CD8-positive, alpha-beta T cell (primary cell): ENCODE measurements at regions of chr3 and their contacts with region 1.

Region 1: DNA sequence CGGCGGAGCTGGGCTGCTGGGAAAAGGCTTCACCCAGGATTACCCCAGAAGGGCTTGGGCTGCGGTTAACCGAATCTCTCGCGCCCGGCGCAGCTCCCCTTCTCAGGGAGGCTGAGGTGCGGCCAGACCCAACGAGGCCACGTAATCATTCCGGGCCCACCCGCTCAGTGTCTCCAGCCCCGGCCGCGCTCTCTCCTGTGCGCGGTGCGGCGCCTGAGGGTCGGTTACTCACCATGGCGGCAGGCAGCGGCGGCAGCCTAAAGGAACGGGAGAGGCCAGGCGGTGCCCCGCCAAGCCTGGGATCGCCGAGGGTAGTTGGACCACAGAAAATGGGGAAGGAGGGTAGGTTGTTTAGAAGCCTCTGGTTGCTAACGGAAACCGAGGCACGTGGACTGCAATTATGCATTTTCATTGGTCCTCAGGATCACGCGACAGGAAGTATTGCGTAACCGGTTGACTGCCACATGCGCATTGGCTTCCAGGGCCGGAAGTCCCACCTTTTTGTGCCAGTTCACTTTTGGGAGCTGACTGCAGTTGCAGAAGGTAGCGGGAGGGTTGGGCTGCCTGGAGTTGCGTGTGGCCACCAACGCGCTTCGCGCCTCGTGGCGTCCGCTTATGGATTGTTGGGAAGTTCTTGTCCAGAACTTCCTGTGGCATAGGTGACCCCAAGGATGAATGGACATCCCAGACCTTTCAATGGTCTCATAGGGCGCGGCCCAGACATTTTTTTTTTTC is at the start of gene LZTFL1:
- DNase-seq: peak; percentile 74 to 97 (median 91)
- ATAC-seq: peak; percentile 83
- H3K4me3 ChIP-seq: peak within 1 kb of the TSS; percentile 88 to 89
- H3K4me3 Mint-ChIP-seq: peak within 1 kb of the TSS; percentile 96
- H3K27ac ChIP-seq: peak within 1 kb of the TSS; percentile 89 to 93
- H3K27ac Mint-ChIP-seq: peak within 1 kb of the TSS; percentile 96
- H3K4me1 ChIP-seq: peaks cover 11% of the 10 kb centered on the region
- H3K4me1 Mint-ChIP-seq: peaks cover 16% of the 10 kb centered on the region
- H3K27me3 ChIP-seq: no peaks in the 10 kb centered on the region
- H3K27me3 Mint-ChIP-seq: no peaks in the 10 kb centered on the region
- CTCF ChIP-seq: no peak
- total RNA-seq, gene LZTFL1: 10.0 TPM

Region 2: GRCh38 chr3:45852828-45853227 is 10.9 kb after region 1 on chr3:
- CTCF ChIA-PET with region 1: interaction called, 8 read pairs
- POLR2A ChIA-PET with region 1: interaction called, 10 read pairs
- intact Hi-C with region 1: no loop called
- DNase-seq: no peak
- ATAC-seq: no peak
- H3K4me3 ChIP-seq: no peak overlapping the region
- H3K4me3 Mint-ChIP-seq: no peak overlapping the region
- H3K27ac ChIP-seq: no peak overlapping the region
- H3K27ac Mint-ChIP-seq: peak overlapping the region; percentile 20
- H3K4me1 ChIP-seq: no peaks in the 10 kb centered on the region
- H3K4me1 Mint-ChIP-seq: peaks cover 29% of the 10 kb centered on the region
- H3K27me3 ChIP-seq: peaks cover 0 to 4% of the 10 kb centered on the region in 2 experiments
- H3K27me3 Mint-ChIP-seq: peaks cover 24% of the 10 kb centered on the region
- CTCF ChIP-seq: no peak

Region 3: GRCh38 chr3:45890405-45890804 is 48.5 kb after region 1 on chr3:
- CTCF ChIA-PET with region 1: interaction called, 3 read pairs
- POLR2A ChIA-PET with region 1: no interaction called
- intact Hi-C with region 1: loop called in 1 of 2 experiments (anchors 2 kb)
- DNase-seq: peak in 5 of 9 experiments; percentile 23 to 66 (median 46)
- ATAC-seq: no peak
- H3K4me3 ChIP-seq: no peak overlapping the region
- H3K4me3 Mint-ChIP-seq: peak overlapping the region; percentile 45
- H3K27ac ChIP-seq: no peak overlapping the region
- H3K27ac Mint-ChIP-seq: no peak overlapping the region
- H3K4me1 ChIP-seq: peaks cover 22% of the 10 kb centered on the region
- H3K4me1 Mint-ChIP-seq: peaks cover 57% of the 10 kb centered on the region
- H3K27me3 ChIP-seq: no peaks in the 10 kb centered on the region
- H3K27me3 Mint-ChIP-seq: peaks cover 16% of the 10 kb centered on the region
- CTCF ChIP-seq: no peak

Region 4: DNA sequence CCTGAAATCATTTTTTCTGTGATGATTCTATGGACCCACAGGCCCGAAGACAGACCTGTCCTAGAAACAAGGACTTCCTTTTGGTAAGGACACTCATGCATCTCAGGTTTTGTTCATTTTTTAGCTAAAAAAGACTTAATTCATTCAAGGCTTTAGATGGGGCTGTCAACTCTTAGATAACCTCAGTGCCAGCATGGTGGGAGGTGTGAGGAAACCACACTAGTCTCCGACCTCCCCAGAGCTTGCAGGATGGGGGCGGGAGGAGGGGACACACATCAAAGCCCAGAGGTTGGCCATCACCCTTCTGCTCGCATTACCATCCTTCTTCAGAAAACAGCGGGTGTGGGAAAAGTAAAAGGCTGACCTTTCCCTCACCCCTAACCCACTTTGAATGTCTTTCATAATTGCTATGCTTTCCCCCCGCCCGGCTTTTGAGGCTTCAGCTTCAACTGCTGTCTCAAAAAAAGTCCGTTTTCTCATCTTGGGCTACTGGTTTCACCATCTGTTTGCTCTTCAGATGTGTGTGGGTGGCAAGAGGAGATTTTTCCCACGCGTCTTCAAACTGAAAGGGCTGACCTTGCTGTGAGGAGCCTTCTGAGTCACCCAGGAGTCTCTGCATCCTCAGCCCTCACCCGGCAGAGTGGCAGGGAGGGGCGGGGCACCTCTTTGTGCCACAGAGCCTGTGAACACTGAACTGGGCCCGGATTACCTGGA is 73.8 kb after region 1 on chr3:
- CTCF ChIA-PET with region 1: no interaction called
- POLR2A ChIA-PET with region 1: interaction called, 4 read pairs
- intact Hi-C with region 1: loop called (anchors 2 to 5 kb)
- DNase-seq: peak; percentile 35 to 86 (median 76)
- ATAC-seq: peak; percentile 86
- H3K4me3 ChIP-seq: peak overlapping the region; percentile 23 to 30
- H3K4me3 Mint-ChIP-seq: peak overlapping the region; percentile 77
- H3K27ac ChIP-seq: peak overlapping the region; percentile 2 to 67
- H3K27ac Mint-ChIP-seq: peak overlapping the region; percentile 75
- H3K4me1 ChIP-seq: peaks cover 20% of the 10 kb centered on the region
- H3K4me1 Mint-ChIP-seq: peaks cover 40% of the 10 kb centered on the region
- H3K27me3 ChIP-seq: no peaks in the 10 kb centered on the region
- H3K27me3 Mint-ChIP-seq: no peaks in the 10 kb centered on the region
- CTCF ChIP-seq: no peak